Right ventricle myocardium inferior (tissue), 1 donor: ENCODE measurements at regions of chr12 and their contacts with region 1.

Region 1: DNA sequence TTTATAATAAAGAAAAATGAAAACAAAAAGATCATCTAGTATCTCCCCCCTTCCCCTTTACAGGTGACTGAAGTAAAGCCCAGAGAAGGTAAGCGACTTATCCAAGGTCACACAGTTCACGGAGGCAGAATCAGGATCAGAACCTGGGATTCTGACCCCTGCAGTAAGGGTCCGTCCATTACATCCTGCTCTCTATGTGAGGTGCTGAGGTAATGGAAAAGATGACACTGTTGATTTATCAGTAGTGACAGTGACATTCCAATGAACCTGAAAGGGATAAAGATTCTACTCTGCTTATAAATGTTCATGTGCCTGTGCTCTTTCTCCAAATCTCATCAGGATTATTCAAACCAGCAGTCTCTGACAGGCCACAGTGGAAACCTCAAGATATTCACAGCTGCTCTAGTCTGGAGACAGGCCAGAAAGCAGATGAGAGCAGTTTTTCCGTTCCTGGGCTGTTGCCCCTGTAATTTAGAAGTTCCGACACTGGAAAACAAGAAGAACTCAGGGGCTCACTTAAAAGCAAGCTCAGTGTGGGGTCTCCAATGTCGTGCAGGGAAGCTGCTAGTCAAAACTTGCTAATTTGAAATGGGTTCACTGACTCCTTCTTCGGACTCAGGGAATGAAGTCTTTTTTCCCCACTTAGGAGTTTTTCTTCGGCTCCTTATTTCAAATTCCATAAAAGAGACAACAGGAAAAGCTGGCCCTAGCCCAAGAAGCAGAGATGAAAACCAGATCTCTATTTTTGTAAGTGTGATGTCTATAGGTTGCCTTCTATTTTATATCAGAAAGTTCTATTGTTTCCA is 131.8 kb upstream of the EEA1 start:
- DNase-seq: no peak
- ATAC-seq: peak; percentile 26

Region 2: DNA sequence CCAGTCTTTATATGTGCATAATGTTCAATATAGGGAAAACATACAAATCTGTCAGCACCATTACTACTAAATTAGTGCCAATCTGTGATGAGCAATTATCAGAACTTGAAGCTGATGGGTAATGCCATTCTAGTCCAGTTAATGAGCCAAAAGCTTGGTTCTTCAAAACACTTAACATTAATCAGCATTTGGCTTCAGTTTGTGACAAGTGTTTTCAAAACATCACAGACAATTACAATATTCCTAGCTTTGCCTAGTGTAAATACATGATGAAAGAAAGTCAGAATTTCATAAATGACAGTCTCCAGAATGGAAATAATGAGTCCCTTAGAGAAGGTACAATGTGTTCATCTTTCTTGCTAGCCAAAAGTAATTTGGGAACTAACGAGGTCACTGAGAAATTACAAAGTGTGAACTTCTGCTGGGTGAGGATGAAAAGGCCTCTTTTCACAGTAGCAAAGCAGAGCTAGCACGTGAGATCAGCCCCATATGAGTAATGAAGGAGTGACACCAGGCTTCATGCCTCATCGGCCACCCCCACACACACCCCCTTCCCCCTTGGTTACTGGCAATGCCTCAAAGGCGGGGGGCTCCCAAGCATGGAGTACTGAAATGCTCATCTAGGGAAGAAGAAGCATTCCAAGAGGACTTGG is 48.8 kb after region 1 on chr12:
- intact Hi-C with region 1: loop called (anchors 5 kb)
- DNase-seq: no peak
- ATAC-seq: peak; percentile 11

Region 3: DNA sequence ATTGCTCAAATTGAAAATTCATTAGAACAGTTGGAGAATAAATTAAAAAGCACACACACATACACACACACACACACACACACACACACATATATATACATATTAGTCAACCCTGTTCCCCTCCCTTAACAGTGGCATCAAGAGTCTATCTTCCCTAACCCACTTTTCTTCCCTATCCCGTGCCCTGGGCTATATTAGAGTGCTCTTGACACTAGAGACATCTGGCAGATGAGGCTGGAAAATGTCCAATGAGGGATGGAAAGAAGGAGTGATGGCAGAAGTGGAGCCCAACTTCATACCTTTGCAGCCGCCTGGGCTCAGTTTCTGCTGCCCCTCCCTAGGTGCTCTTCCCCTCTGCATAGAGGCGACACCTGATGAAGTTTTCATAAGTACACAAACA is 144.5 kb after region 1 on chr12:
- intact Hi-C with region 1: no loop called
- DNase-seq: no peak
- ATAC-seq: peak; percentile 58

Region 4: DNA sequence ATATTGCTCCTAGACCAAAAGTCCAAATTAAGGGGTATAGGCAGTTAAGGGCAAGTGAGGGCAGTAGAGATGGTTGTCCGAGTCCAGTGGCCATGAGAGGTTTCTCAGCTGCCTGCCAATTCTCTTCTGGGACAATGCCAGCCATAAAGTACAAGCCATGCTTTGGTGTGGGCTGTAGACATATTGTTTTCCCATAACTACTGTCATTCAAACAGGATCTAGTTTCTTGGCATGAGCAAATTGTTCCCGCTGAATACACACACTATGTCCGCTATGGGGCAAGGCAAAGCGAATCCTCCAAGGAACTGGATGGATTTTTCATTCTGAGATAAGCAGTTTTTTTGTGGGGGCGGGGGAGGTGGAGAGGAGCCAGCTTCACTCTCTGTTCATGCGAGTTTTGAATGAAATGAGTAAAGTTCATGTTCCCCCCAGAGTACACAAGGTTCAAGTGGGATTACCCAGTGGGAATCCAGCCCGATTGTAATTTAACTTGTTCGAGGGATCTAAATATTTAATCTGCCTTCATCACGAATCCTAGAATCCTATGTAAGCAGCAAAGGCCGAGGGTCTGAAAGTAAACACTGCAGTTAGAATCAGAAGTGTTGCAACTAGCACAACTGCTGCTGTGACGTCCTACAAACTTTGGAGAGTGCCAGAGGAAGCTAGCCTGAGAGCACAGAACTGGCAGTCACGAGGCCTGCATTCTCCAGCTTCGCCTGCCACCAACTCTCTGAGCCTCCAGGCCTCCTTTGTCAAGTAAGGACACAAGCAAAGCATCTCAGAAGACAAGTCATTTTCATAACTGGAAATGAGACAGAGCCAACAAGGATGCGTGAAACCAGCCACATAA is 753.3 kb after region 1 on chr12:
- intact Hi-C with region 1: no loop called
- DNase-seq: peak; percentile 86
- ATAC-seq: peak; percentile 92